PC-3 (cell line): ENCODE measurements at regions of chr1 and their contacts with region 1.

Region 1: DNA sequence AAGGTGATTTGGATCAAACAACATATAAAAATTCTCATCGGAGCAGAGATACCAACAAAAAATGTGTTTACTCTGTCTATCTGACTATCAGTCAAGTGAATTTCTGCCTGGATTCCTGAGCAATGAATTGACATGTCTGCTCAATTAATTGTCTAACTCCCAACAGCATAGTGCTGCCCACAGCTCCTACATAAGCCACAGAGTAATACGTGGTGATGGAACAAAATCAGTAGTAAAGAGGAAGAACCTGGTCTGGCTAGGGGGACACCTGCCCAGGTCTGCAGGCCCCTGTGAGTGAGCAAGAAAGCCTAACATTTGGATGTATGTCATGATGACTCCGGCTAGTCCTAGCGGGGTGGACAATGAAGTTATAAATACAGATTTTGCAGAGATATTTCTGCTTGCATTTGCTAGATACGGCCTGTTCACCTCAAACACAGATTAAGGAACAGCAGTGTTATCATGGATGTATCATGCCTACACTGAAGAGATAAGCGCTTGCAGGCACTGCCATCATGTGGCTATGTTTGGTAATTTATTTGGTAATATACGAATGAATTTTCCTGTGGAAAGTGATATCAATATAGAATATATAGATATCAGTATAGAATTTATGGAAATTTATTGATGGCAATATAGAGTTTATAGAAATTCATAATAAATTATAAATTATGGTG is 69.6 kb upstream of the LRRC8B start:
- DNase-seq: peak; percentile 81
- ATAC-seq: peak; percentile 89
- H3K4me3 ChIP-seq: peak overlapping the region; percentile 10; the same call in 1 of the 2 replicates
- H3K27ac ChIP-seq: no peak overlapping the region
- H3K4me1 ChIP-seq: peaks cover 8% of the 10 kb centered on the region
- H3K27me3 ChIP-seq: no peaks in the 10 kb centered on the region
- CTCF ChIP-seq: peak; percentile 70

Region 2: DNA sequence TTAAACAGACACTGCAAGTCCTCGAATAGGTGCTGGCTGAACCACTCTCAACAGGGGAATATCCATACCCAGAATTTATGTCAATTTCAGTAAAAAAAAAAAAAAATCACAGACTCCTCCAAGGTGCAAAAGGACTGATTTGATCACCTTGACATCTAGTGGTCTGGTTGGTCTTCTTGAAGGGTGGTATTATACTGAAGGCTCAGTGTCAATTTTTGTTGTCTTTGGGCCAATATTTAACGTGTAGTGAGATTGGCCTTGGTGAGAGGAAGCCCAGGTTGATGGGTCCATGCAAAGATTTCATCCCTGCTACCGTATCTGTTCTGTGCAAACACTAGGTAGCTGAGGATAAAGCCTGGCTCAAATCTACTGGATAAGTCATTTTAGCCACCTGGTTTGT is 178.3 kb before region 1 on chr1:
- CTCF ChIA-PET with region 1: no interaction called
- POLR2A ChIA-PET with region 1: no interaction called
- intact Hi-C with region 1: loop called (anchors 5 kb)
- DNase-seq: peak; percentile 27
- ATAC-seq: peak; percentile 46; the same call in 1 of the 2 replicates
- H3K4me3 ChIP-seq: no peak overlapping the region
- H3K27ac ChIP-seq: no peak overlapping the region
- H3K4me1 ChIP-seq: peaks cover 15% of the 10 kb centered on the region
- H3K27me3 ChIP-seq: no peaks in the 10 kb centered on the region
- CTCF ChIP-seq: peak; percentile 50

Region 3: DNA sequence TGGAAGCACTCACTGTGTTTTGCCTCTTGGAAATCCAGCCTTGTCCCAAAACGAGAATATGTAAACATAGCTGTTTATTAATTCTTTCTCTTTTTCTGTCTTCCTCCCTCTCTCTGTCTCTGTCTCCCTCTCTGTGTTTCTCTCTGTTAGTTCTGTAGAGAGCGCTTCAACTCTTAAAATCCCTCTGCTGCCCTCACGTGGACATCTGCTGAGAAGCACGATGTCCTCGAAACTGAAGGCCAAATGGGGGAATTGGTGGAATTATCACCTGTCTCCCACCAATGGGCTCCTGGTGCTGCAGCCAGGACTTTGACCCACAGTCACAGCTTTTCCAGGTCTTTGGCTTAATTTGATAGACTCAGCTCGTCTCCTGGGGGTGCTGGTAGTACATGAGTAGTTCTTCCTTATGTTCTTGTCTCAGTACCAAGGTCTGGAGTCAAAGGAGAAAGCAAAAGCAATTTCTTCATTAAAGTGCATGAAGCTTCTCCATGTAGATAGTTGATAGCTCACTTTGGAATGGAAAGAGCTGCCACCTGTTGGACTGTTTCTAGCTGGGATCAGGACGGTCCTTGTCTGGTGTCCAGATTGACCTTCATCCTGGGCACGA is 96.6 kb before region 1 on chr1:
- CTCF ChIA-PET with region 1: no interaction called
- POLR2A ChIA-PET with region 1: no interaction called
- intact Hi-C with region 1: loop called (anchors 1 kb)
- DNase-seq: peak; percentile 86
- ATAC-seq: peak; percentile 83
- H3K4me3 ChIP-seq: no peak overlapping the region
- H3K27ac ChIP-seq: no peak overlapping the region
- H3K4me1 ChIP-seq: peaks cover 20% of the 10 kb centered on the region
- H3K27me3 ChIP-seq: peaks cover 6% of the 10 kb centered on the region; the same call in 1 of the 2 replicates
- CTCF ChIP-seq: peak; percentile 87

Region 4: GRCh38 chr1:89378001-89378400 is 77.0 kb before region 1 on chr1:
- CTCF ChIA-PET with region 1: no interaction called
- POLR2A ChIA-PET with region 1: no interaction called
- intact Hi-C with region 1: no loop called
- DNase-seq: no peak
- ATAC-seq: no peak
- H3K4me3 ChIP-seq: no peak overlapping the region
- H3K27ac ChIP-seq: no peak overlapping the region
- H3K4me1 ChIP-seq: no peaks in the 10 kb centered on the region
- H3K27me3 ChIP-seq: peaks cover 9% of the 10 kb centered on the region; the same call in 1 of the 2 replicates
- CTCF ChIP-seq: no peak

Region 5: DNA sequence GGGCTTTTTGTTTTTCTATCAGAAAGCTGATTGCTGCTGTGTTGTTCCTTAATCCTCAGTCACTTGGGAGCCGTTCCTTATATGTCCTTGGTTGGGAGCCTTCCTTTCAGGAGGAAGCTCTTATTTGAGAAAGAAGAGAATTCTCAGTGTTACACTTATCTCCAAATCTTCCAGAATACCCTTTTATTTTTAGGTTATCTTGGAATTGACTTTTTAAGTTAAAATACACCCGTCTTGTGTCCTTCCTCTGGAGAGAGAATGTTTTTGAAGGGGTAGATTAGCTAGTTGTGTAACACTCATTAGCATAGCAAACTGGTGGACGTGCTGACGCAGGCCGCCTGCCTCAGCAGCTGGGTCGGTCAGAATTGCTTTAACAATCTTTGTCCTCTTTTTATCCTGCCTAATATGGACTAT is 111.8 kb after region 1 on chr1:
- CTCF ChIA-PET with region 1: no interaction called
- POLR2A ChIA-PET with region 1: no interaction called
- intact Hi-C with region 1: no loop called
- DNase-seq: no peak
- ATAC-seq: no peak
- H3K4me3 ChIP-seq: no peak overlapping the region
- H3K27ac ChIP-seq: no peak overlapping the region
- H3K4me1 ChIP-seq: no peaks in the 10 kb centered on the region
- H3K27me3 ChIP-seq: no peaks in the 10 kb centered on the region
- CTCF ChIP-seq: no peak